PC-3 (cell line): ENCODE measurements at regions of chr1 and their contacts with region 1.

Region 1: DNA sequence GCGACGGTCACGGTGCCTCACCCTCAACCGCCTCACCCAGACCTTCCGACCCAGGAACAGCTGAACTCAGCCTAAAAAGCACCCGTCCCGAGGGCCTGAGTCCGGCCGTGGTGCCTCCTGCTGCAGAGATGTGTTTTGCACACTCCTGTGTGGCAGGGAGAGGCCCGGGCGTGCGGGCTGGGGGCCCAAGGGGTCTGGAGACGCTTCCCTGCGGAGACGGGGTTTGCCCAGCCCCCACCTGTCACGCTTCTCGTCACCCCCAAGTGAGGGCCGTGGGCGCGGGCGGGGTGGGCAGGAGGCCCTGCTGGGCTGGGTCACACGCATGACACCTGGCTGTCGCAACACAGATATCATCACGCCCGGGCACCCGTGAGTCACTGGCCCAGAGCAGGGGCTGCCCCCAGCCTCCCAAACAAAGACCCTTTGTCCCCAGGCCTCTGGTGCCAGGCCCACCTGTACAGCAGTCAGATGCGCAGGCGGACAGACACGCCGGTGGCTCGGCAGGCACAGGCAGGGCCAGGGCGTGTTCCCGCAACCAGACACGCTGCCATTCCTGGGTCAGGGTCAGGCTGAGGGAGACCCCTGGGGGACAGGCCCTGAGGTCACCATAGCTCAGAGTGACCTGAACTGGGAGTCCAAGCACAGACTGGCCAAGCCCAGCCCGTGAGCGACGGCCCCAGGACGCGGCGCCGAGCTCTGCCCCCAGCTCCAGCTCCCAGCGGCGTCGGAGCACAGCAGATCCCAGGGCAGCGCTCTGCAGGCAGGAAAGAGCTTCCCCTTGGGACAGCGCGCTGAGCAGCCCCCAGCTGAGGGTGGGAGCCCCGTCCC is 6.1 kb downstream of the B3GALT6 start:
- DNase-seq: peak; percentile 82
- ATAC-seq: peak; percentile 29
- H3K4me3 ChIP-seq: peak overlapping the region; percentile 39
- H3K27ac ChIP-seq: peak overlapping the region; percentile 91
- H3K4me1 ChIP-seq: peaks cover 57% of the 10 kb centered on the region
- H3K27me3 ChIP-seq: no peaks in the 10 kb centered on the region
- CTCF ChIP-seq: no peak

Region 2: GRCh38 chr1:1264868-1265272 is 26.8 kb after region 1 on chr1:
- CTCF ChIA-PET with region 1: interaction called, 4 read pairs
- POLR2A ChIA-PET with region 1: no interaction called
- intact Hi-C with region 1: loop called (anchors 2 kb)
- DNase-seq: peak; percentile 100
- ATAC-seq: peak; percentile 96
- H3K4me3 ChIP-seq: no peak overlapping the region
- H3K27ac ChIP-seq: peak overlapping the region; percentile 92
- H3K4me1 ChIP-seq: peaks cover 23% of the 10 kb centered on the region
- H3K27me3 ChIP-seq: no peaks in the 10 kb centered on the region
- CTCF ChIP-seq: peak; percentile 94

Region 3: DNA sequence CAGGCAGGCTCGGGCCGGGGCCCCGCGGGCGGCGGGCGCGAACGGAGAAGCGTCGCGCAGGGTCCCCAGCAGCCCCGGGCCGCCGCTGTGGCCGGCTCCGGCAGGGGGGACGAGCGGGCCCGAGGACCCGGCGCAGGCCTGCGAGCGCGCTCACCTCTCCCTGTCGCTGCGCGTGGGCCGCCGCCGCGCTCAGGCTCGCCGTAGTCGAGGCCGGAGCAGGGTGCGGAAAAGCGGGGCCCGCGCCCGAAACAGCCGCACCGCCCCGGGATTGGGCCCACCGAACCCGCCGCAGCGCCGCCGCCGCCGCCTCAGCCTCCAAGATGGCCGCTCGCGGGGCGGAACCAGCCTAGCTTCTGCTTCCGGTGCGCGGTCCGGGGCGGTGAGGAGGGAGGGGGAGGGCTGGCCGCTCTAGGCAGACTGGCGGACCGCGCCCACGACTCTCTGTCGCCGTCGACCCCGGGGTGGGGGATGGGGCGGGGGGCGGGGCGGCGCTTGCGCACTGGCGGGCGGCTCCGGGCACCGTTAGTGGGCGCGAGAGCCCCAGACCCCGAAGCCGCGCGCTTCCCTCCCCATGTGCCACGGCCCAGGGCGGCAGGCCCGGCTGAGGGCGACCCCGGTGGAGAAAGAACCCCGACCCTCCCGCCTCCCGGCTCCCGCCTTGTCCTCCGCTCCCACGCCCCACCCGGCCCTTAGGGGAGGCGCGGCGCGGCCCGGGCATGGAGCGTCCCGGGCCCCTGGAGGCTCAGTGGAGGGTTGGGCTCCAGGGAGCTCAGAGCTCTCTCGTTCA is 35.6 kb after region 1 on chr1 and contains the start of gene UBE2J2:
- CTCF ChIA-PET with region 1: no interaction called
- POLR2A ChIA-PET with region 1: interaction called, 11 read pairs
- intact Hi-C with region 1: no loop called
- DNase-seq: peak; percentile 91
- ATAC-seq: peak; percentile 80
- H3K4me3 ChIP-seq: peak within 1 kb of the TSS; percentile 96
- H3K27ac ChIP-seq: peak within 1 kb of the TSS; percentile 90
- H3K4me1 ChIP-seq: peaks cover 29% of the 10 kb centered on the region
- H3K27me3 ChIP-seq: no peaks in the 10 kb centered on the region
- CTCF ChIP-seq: no peak
- total RNA-seq, gene UBE2J2: 182 and 200 TPM in 2 replicates